Activated CD4-positive, alpha-beta T cell treated with anti-CD3 and anti-CD28 coated beads for 36 hours (primary cell): ENCODE measurements at regions of chr10 and their contacts with region 1.

Region 1: DNA sequence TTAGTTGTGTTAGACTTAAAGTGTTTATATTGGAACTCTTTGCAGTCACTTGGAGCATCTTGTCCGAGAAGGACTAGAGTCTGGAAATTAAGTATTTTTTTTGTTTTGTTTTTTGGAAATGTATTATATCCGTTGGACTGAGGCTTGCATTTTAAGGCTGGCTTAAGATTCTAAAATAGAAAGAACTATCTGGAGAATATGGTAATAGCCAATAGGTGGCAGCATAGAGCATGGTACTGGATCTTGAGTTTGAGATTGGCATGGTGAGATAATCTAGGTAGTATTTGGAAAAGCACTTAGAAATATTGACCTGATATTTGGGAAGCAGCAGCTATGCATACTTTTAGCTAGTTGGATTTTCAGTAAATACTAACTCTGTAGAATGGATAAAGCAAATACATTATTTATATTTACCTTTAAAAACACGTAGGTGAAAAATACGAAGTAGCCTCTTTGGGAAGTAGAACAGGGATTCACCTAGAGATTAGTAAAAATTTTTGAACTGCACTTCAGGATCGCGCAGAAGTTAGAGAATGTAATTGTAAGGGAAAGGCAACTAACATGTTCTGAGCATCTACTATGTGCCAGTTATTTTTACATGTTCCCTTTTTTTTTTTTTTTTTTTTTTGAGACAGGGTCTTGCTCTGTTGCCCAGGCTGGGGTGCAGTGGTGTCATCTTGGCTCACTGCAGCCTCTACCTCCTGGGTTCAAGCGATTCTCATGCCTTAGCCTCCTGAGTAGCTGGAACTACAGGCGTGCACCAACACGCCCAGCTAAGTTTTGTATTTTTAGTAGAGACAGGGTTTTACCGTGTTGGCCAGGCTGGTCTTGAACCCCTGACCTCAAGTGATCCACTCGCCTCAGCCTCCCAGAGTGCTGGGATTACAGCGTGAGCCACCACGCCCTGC is 78.6 kb downstream of the LCOR start:
- DNase-seq: no peak
- ATAC-seq: no peak
- H3K4me3 Mint-ChIP-seq: no peak overlapping the region
- H3K27ac Mint-ChIP-seq: no peak overlapping the region
- H3K4me1 Mint-ChIP-seq: peaks cover 27% of the 10 kb centered on the region
- H3K27me3 Mint-ChIP-seq: no peaks in the 10 kb centered on the region

Region 2: DNA sequence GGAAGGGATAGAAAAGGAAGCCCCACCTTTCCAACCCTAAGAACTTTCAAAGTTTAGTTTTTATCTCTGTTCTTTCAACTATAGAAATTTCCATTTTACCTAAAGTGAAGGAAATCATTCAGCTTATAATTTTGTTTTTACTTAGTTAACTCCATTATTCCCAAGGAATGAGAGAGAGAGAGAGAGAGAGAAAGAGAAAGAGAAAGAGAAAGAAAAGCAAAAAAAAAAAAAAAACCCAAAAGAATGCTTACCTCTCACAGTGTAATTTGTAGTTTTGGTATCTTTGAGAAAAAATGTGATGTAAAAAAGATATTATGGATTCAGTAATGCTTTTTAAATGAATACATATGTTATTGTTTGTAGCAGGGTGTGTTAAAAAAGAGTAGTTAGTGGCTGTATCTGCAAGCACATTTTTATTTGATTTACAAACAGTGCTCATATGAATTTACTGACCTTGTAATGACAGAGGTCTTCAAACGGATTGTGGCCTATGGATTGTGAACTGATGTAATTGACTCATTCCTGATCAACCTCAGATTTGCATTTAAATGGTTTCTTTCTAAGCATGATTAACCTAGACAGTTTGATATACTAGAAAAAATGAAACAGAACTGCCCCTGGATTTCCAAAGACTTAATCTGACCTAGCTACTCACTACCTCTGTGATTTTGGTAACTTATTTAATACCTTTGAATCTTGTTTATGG is 13.7 kb before region 1 on chr10:
- CTCF ChIA-PET with region 1: interaction called, 18 read pairs
- POLR2A ChIA-PET with region 1: no interaction called
- intact Hi-C with region 1: no loop called
- DNase-seq: no peak
- ATAC-seq: peak; percentile 78
- H3K4me3 Mint-ChIP-seq: no peak overlapping the region
- H3K27ac Mint-ChIP-seq: peak overlapping the region; percentile 61
- H3K4me1 Mint-ChIP-seq: peaks cover 52% of the 10 kb centered on the region
- H3K27me3 Mint-ChIP-seq: no peaks in the 10 kb centered on the region

Region 3: DNA sequence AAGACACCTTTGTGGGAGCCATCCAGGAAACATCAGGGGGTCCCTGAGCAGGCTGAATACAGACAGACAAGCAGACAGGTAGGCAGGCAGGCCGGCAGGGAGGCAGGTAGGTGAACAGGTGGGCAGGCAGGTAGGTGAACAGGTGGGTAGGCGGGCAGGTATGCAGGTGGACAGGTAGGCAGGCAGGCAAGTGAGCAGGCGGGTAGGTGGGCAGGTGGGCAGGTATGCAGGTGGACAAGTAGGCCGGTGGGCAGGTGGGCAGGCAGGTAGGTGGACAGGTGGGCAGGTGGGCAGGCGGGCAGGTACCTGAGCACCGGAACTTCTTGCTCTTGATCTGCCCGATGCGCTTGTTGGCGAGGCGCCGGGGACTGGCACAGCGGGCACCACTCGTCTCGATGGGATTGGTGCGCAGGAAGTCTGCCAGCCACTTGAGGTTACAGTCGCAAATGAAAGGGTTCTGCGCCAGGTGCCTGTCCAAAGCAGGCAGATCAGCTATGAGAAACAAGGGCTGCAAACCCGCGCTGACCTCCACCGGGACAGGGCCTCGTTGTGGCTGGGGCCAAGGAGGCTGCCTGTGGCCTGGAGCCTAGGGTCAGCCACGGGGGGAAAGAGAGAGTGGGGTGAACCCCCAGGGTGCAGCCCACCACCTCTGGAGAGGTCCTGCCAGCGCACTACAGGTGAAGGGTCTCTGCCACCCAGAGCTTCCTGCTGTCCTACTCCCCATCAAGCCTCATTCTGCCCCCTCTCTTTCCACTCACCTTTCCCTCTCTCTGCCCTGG is 138.1 kb after region 1 on chr10:
- CTCF ChIA-PET with region 1: no interaction called
- POLR2A ChIA-PET with region 1: no interaction called
- intact Hi-C with region 1: no loop called
- DNase-seq: no peak
- ATAC-seq: no peak
- H3K4me3 Mint-ChIP-seq: no peak overlapping the region
- H3K27ac Mint-ChIP-seq: no peak overlapping the region
- H3K4me1 Mint-ChIP-seq: peaks cover 3% of the 10 kb centered on the region
- H3K27me3 Mint-ChIP-seq: peaks cover 3% of the 10 kb centered on the region

Region 4: GRCh38 chr10:97089209-97089870 is 178.6 kb after region 1 on chr10:
- CTCF ChIA-PET with region 1: no interaction called
- POLR2A ChIA-PET with region 1: no interaction called
- intact Hi-C with region 1: no loop called
- DNase-seq: no peak
- ATAC-seq: no peak
- H3K4me3 Mint-ChIP-seq: no peak overlapping the region
- H3K27ac Mint-ChIP-seq: no peak overlapping the region
- H3K4me1 Mint-ChIP-seq: no peaks in the 10 kb centered on the region
- H3K27me3 Mint-ChIP-seq: peaks cover 16% of the 10 kb centered on the region